Sciatic nerve (tissue), 2 donors: ENCODE measurements at regions of chr9 and their contacts with region 1.

Region 1: GRCh38 chr9:34500623-34501267 is 22.0 kb downstream of the ENHO start:
- DNase-seq: peak; percentile 80
- ATAC-seq: peak; percentile 31

Region 2: GRCh38 chr9:34522971-34523797 is 22.4 kb after region 1 on chr9 and contains the start of gene ENHO:
- intact Hi-C with region 1: no loop called
- DNase-seq: peak; percentile 92
- ATAC-seq: peak; percentile 96
- total RNA-seq, gene ENHO: 23.5 TPM

Region 3: DNA sequence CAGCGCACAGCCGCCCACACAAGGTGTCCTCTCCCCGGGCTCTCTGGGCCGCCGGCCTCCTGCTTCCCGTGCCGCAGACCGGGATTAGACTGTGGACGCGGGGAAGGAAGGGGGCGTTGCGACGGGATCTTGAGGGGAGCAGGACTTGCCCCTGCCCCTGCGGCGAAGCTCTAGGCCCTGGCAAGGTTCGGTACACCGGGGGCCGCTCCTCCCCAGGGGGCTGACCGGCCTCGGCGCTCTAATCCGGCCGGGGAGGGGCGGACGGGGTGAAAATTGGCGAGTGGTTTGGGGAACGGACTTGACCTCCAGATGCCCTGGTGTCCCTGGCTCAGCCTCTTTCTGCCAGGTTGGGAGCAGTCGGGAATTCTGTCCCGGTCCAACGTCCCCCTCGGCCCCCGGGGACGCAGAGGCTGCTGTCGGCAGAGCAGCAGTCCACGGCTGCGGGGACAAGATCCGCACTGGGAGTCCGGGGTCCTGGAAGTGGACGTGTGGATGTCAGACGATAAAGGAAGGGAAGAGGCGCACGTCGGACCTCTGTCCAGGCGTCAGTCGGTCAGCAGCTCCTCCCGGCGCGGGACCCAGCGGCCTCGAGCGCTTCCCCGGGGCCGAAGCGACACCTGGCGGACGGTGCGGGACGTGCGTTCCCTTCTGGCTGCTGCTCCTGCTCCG is 90.6 kb after region 1 on chr9:
- intact Hi-C with region 1: loop called (anchors 5 kb)
- DNase-seq: peak; percentile 95
- ATAC-seq: peak; percentile 88